ENCODE measurements at regions of chr3 and their contacts with region 1.

Region 1: GRCh38 chr3:71728632-71729342 is 3.6 kb upstream of the EIF4E3 start:
- DNase-seq: no peak
- CTCF ChIP-seq: no peak

Region 2: GRCh38 chr3:71583566-71584449 is 145.0 kb before region 1 on chr3 and contains the start of gene FOXP1:
- CTCF ChIA-PET with region 1: no interaction called
- POLR2A ChIA-PET with region 1: no interaction called
- DNase-seq: peak; percentile 27
- CTCF ChIP-seq: no peak

Region 3: DNA sequence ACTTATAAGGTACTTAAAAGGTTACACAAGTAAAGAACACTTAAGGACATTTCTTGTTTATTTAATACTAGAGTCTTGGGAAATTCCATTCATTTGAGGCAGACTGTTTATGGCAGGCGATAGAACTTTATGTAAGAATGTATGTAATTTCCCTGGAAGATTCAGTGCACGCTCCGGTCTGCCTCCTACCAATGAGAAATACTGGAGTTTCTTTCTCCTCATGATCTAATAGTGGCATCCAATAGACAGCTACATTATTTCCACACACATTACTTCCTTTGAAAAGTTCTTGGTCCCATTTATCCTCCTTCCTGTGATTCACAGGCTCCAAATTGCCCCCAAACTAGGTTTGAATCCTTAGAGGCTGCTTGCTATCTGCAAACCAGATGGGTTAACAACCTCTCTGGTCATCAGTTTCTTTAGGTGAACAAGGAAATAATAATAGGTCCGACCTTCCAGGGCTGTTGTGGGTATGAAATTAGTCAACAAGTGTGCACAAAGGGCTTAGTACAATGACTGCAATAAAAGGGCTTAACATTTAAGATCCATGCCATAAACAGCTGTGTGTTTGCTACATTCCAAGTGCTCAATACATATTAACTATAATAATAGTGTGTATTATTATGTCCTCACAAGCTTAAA is 34.3 kb before region 1 on chr3:
- CTCF ChIA-PET with region 1: interaction called, 14 read pairs
- POLR2A ChIA-PET with region 1: no interaction called
- DNase-seq: no peak
- CTCF ChIP-seq: no peak

Region 4: DNA sequence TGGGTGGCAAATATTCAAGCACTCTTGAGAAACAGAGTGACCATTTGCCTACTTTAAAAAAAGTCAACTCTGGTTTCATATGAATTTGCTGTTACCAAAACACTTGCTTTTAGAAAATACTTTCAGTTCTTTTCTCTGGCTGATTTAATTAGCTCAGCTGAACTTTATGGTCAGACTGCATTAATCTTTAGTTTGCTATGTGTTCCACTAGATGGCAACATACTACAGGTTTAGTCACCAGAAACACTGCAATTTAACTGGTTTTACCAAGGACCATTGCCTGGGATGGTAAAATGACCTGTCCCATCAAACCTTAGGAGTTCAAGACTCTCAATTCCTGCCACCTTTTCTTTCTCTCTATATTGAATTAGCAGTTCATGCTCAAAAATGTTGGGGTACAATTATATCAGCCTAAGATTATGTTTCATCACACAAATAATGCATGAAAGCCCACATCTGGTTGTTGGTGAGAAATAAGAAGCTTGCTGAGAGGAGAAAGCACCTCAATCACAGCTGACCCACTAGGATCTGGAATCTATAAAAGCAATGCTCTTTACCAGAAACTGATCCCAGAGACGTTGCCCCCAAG is 17.8 kb before region 1 on chr3:
- CTCF ChIA-PET with region 1: interaction called, 15 read pairs
- POLR2A ChIA-PET with region 1: no interaction called
- DNase-seq: peak; percentile 65
- CTCF ChIP-seq: peak; percentile 51

Region 5: GRCh38 chr3:71763426-71763825 is 34.6 kb after region 1 on chr3:
- CTCF ChIA-PET with region 1: interaction called, 12 read pairs
- POLR2A ChIA-PET with region 1: no interaction called
- DNase-seq: no peak
- CTCF ChIP-seq: no peak

Region 6: GRCh38 chr3:71859123-71859519 is 130.3 kb after region 1 on chr3:
- CTCF ChIA-PET with region 1: interaction called, 16 read pairs
- POLR2A ChIA-PET with region 1: no interaction called
- DNase-seq: no peak
- CTCF ChIP-seq: peak; percentile 28

Region 7: DNA sequence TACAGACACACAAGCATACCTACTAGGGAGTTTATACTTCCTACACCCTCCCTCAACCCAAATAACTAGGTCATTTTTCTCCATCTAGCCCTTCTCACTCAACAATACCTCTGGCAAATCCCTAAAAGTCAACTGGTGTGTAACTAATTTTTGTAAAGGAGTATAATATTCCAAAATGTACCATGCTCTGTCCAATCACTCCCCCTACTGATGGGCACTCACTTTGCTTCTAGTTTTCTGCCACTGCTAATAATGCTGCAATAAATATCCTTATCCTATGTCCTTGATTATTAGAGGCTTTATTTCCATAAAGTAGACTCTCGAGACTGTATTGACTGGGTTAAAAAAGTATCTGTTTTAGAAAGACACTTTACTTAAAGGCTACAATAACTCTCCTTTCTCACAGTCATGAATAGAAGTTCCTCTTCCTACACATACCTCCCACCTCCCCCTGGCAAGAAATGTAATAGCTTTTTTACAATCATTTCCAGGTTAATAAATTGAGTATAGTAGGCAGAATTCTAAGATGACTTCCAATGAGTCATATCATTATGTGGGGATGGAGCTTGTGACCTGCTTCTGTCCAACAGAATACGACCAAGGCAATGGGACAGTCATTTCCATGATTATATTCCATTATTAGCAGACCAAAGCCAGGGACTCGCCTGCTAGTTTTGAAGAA is 1089.4 kb after region 1 on chr3:
- CTCF ChIA-PET with region 1: interaction called, 22 read pairs
- POLR2A ChIA-PET with region 1: no interaction called
- DNase-seq: no peak
- CTCF ChIP-seq: peak; percentile 73

Measured in GM10248 (cell line).